ENCODE measurements at regions of chr15 and their contacts with region 1.

Region 1: DNA sequence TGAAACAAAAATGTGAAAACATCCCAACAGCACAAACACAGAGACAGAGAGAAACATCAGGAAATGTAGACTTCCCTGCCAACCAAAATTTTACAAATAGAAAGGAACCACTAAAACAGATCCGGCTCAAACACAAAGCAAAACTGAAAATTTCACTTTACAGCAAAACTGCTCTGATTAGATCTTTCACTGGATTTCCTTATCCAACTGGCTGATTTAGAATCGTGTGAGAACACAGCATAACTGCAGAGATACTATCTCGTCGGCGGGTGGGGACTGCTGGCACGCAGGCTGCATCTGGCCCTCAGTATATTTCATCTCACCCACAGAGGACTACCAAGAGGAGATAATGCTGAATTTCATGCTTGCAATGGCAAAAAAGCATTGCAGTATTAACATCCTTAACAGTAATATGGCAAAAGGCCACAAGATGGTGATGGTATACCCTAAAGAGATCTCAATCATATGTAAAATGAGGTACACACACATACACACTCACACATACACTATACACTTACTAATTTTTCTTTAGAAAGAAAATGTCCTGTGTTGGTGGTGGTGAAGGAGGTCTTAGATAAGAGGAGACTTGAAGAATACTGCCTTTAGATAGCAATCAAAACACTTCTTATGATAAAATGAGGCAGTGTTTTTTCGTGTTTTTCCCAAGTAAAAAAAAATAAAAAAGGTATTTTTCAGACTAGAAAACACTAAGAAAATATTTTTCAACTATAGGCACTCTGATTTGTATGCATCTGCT is 10.6 kb upstream of the LEO1 start:
- DNase-seq: peak in 5 of 7 donors; percentile 17 to 69 (median 52)
- H3K4me3 ChIP-seq: peak overlapping the region in 2 of 4 donors; percentile 5 to 23
- H3K27ac ChIP-seq: peak overlapping the region; percentile 8 to 63 (median 40)
- H3K4me1 ChIP-seq: peaks cover 8 to 15% of the 10 kb centered on the region in 2 donors
- H3K27me3 ChIP-seq: no peaks in the 10 kb centered on the region
- CTCF ChIP-seq: peak in 5 of 6 experiments; percentile 32 to 70 (median 45)
- POLR2A ChIP-seq: no peak

Region 2: GRCh38 chr15:51649659-51650521 is 332.3 kb before region 1 on chr15:
- intact Hi-C with region 1: no loop called
- DNase-seq: peak in 5 of 7 donors; percentile 20 to 59 (median 51)
- H3K4me3 ChIP-seq: no peak overlapping the region
- H3K27ac ChIP-seq: no peak overlapping the region
- H3K4me1 ChIP-seq: no peaks in the 10 kb centered on the region
- H3K27me3 ChIP-seq: no peaks in the 10 kb centered on the region
- CTCF ChIP-seq: peak; percentile 55 to 91 (median 81)
- POLR2A ChIP-seq: no peak

Region 3: DNA sequence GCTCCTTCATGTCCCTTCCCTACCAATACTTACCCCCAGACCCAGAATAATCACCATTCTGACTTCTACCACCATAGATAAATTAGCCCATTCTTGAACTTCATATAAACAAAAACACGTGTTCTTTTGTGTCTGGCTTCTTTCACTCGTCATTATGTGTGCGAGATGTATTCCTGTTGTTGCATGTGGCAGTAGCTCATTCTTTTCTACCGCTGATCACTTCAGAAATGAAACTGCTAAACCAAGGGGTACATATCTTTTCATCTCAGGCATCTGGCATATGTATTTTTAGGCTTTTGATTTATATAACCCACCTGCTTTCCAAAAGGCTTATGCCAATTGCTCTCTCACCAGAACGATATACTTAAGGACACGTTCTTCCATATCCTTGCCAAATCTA is 314.7 kb before region 1 on chr15:
- intact Hi-C with region 1: no loop called
- DNase-seq: no peak
- H3K4me3 ChIP-seq: no peak overlapping the region
- H3K27ac ChIP-seq: no peak overlapping the region
- H3K4me1 ChIP-seq: no peaks in the 10 kb centered on the region
- H3K27me3 ChIP-seq: no peaks in the 10 kb centered on the region
- CTCF ChIP-seq: no peak
- POLR2A ChIP-seq: no peak

Region 4: GRCh38 chr15:51726351-51727073 is 255.7 kb before region 1 on chr15:
- intact Hi-C with region 1: no loop called
- DNase-seq: peak; percentile 62 to 88 (median 67)
- H3K4me3 ChIP-seq: no peak overlapping the region
- H3K27ac ChIP-seq: peak overlapping the region in 3 of 5 donors; percentile 18 to 64 (median 60)
- H3K4me1 ChIP-seq: peaks cover 10 to 58% of the 10 kb centered on the region in 2 donors
- H3K27me3 ChIP-seq: no peaks in the 10 kb centered on the region
- CTCF ChIP-seq: no peak
- POLR2A ChIP-seq: peak in 1 of 2 donors; percentile 44

Region 5: GRCh38 chr15:52139599-52140491 is 157.7 kb after region 1 on chr15:
- intact Hi-C with region 1: loop called in 1 of 2 experiments (anchors 10 kb)
- DNase-seq: peak; percentile 64 to 89 (median 78)
- H3K4me3 ChIP-seq: no peak overlapping the region
- H3K27ac ChIP-seq: no peak overlapping the region
- H3K4me1 ChIP-seq: no peaks in the 10 kb centered on the region
- H3K27me3 ChIP-seq: no peaks in the 10 kb centered on the region
- CTCF ChIP-seq: peak; percentile 79 to 87 (median 83)
- POLR2A ChIP-seq: no peak